ENCODE measurements at regions of chr17 and their contacts with region 1.

Region 1: DNA sequence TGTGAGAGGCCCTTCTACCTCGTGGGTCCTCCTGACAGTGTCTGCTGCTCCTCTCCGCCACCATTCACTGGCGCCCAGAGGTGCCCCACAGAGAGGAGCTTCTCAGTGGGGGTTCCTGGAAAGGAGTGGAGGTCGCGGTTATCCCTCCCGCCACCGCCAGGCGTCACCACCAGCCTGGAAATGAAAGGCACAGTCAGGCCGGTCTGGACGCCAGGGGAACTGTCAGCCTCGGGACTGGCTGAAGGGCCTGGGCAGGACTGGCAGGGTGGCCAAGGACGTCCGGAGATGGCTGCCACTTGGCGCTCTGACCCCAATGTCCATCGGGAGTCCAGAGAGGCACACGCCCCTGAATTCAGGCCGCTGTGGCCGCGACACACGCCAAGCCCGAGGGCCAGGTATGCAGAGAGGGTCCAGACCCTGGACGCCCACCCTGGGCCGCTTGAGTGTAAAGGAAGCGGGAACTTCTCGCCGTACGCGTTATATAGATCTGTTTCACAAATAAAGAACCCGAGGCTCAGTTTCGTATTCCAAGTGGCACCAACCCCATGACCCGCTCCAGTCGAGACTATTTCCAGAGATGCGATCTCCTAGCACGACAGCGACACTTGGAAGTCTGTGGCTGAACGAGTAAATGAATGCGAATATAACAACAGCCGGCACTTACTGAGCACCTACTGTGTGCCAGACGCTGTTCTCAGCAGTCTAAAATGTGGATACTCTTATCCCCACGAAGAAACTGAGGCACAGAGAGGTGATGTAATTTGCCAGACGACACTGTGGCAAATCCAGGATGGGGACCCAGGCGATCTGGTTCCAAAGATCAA is 7.6 kb upstream of the NXPH3 start:
- DNase-seq: peak; percentile 94

Region 2: GRCh38 chr17:49694847-49695683 is 127.0 kb after region 1 on chr17:
- intact Hi-C with region 1: loop called (anchors 1 kb)
- DNase-seq: peak; percentile 82

Region 3: GRCh38 chr17:49779739-49780231 is 211.7 kb after region 1 on chr17:
- intact Hi-C with region 1: loop called (anchors 5 kb)
- DNase-seq: no peak

Region 4: GRCh38 chr17:49851387-49852291 is 283.6 kb after region 1 on chr17:
- intact Hi-C with region 1: loop called (anchors 2 kb)
- DNase-seq: peak; percentile 89

Measured in cardiac septum (tissue), 1 donor.